ENCODE measurements at regions of chr4 and their contacts with region 1.

Region 1: GRCh38 chr4:27684610-27685011 is 824.0 kb downstream of the STIM2 start:
- DNase-seq: peak in 9 of 10 donors; percentile 12 to 79 (median 67)
- H3K4me3 ChIP-seq: no peak overlapping the region
- H3K27ac ChIP-seq: peak overlapping the region in 4 of 59 donors; percentile 22 to 60 (median 46)
- H3K27me3 ChIP-seq: peaks cover 0 to 5% (median 0%) of the 10 kb centered on the region in 45 donors
- CTCF ChIP-seq: peak in 55 of 56 donors; percentile 40 to 90 (median 80)

Region 2: DNA sequence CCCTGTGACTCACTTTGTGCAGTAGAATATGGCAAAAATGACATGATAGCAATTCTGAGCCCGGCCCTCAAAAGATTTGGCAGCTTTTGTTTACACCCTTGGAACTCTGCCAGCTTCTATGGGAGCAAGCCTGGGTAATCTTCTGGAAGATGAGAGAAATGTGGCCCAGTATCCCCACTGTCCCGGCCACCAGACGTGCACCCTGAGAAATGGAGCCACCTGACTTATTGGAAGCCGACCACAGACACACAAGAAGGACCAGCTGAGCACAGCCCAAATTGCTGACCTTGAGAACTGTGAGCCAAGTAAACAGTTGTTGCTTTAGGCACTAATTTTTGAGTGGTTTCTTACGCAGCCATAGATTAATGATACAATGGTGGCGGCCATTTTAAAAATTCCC is 626.9 kb before region 1 on chr4:
- intact Hi-C with region 1: loop called in 1 of 2 experiments (anchors 10 kb)
- DNase-seq: no peak
- H3K4me3 ChIP-seq: no peak overlapping the region
- H3K27ac ChIP-seq: no peak overlapping the region
- H3K27me3 ChIP-seq: peaks cover 0 to 3% (median 0%) of the 10 kb centered on the region in 45 donors
- CTCF ChIP-seq: no peak